GM12878 (cell line): ENCODE measurements at regions of chr19 and their contacts with region 1.

Region 1: GRCh38 chr19:57389730-57390598 is at the start of gene ZNF548:
- DNase-seq: peak; percentile 93
- ATAC-seq: peak; percentile 99
- H3K4me3 ChIP-seq: peak within 1 kb of the TSS; percentile 68
- H3K27ac ChIP-seq: peak within 1 kb of the TSS; percentile 74
- H3K4me1 ChIP-seq: peaks cover 7% of the 10 kb centered on the region; the same call in 1 of the 2 replicates
- H3K27me3 ChIP-seq: no peaks in the 10 kb centered on the region
- CTCF ChIP-seq: peak in 2 of 3 experiments; percentile 18 to 23; a peak in 2 of 6 replicates
- EP300 ChIP-seq: no peak
- POLR2A ChIP-seq: peak; percentile 84
- RAD21 ChIP-seq: peak; percentile 16; the same call in 1 of the 2 replicates
- polyA plus RNA-seq, gene ZNF548: 3.9 to 5.6 TPM

Region 2: GRCh38 chr19:56953470-56953869 is 436.5 kb before region 1 on chr19:
- CTCF ChIA-PET with region 1: no interaction called
- POLR2A ChIA-PET with region 1: no interaction called
- RAD21 ChIA-PET with region 1: no interaction called
- SMC1A ChIA-PET with region 1: no interaction called
- in situ Hi-C with region 1: no loop called
- intact Hi-C with region 1: no loop called
- DNase-seq: no peak
- ATAC-seq: no peak
- H3K4me3 ChIP-seq: no peak overlapping the region
- H3K27ac ChIP-seq: no peak overlapping the region
- H3K4me1 ChIP-seq: no peaks in the 10 kb centered on the region
- H3K27me3 ChIP-seq: no peaks in the 10 kb centered on the region
- CTCF ChIP-seq: no peak
- EP300 ChIP-seq: no peak
- POLR2A ChIP-seq: no peak
- RAD21 ChIP-seq: no peak

Region 3: DNA sequence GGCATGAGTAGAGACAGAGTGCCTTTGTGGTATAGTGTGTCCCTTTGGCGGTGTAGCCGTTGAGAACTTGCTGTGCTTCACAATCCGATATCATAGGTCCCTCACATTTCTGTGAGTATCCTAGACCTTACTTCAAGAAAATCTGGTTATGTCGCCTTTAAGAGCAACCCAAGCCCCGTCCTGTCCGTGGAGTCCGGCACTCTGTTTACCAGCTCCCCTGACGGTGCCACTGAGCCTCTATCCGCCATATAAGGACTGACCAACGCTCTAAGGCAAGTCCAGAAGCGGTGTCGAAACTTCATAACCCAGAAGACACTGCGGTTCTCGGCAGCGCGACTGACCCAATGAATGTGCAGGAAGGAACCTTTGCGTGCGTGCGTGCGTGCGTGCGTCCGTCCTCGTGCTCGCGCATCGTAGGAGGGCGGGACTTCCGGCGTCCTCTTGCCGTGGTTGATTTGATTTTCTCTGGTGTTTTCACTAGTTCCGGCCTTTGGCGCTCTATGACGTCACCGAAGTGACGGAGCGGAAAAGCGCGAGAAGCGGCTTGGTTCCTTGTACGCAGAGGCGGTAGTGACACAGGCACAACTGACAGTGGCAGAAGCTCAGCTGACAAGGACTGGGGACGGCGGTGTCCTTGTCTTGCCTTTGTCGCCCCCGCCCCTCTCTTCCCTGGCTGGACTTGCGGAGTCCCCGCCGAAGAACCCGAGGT is 26.8 kb before region 1 on chr19 and contains the starts of genes TRAPPC2B and ZNF547:
- CTCF ChIA-PET with region 1: interaction called, 5 read pairs
- POLR2A ChIA-PET with region 1: interaction called, 6 read pairs
- RAD21 ChIA-PET with region 1: no interaction called
- SMC1A ChIA-PET with region 1: no interaction called
- in situ Hi-C with region 1: no loop called
- intact Hi-C with region 1: loop called (anchors 1 kb)
- DNase-seq: peak; percentile 98
- ATAC-seq: peak; percentile 100
- H3K4me3 ChIP-seq: peak within 1 kb of the TSS; percentile 72
- H3K27ac ChIP-seq: peak within 1 kb of the TSS; percentile 78
- H3K4me1 ChIP-seq: no peaks in the 10 kb centered on the region
- H3K27me3 ChIP-seq: no peaks in the 10 kb centered on the region
- CTCF ChIP-seq: no peak
- EP300 ChIP-seq: no peak; a peak in 1 of 4 replicates
- POLR2A ChIP-seq: peak; percentile 95
- RAD21 ChIP-seq: no peak
- polyA plus RNA-seq, gene TRAPPC2B: 71.0 to 86.4 TPM
- polyA plus RNA-seq, gene ZNF547: 2.3 to 3.5 TPM